ENCODE measurements at regions of chr15 and their contacts with region 1.

Region 1: GRCh38 chr15:89334510-89335288 is at the start of gene POLG:
- DNase-seq: peak; percentile 99
- H3K4me3 Mint-ChIP-seq: peak within 1 kb of the TSS; percentile 85
- H3K27ac Mint-ChIP-seq: peak within 1 kb of the TSS; percentile 93
- H3K4me1 Mint-ChIP-seq: peaks cover 50% of the 10 kb centered on the region
- H3K27me3 Mint-ChIP-seq: peaks cover 4% of the 10 kb centered on the region
- total RNA-seq, gene POLG: 94.8 to 97.4 TPM

Region 2: GRCh38 chr15:88913017-88913849 is 421.5 kb before region 1 on chr15 and contains the start of gene MFGE8:
- CTCF ChIA-PET with region 1: no interaction called
- POLR2A ChIA-PET with region 1: no interaction called
- intact Hi-C with region 1: loop called (anchors 10 kb)
- DNase-seq: peak; percentile 78
- H3K4me3 Mint-ChIP-seq: peak within 1 kb of the TSS; percentile 76
- H3K27ac Mint-ChIP-seq: peak within 1 kb of the TSS; percentile 42
- H3K4me1 Mint-ChIP-seq: peaks cover 17% of the 10 kb centered on the region
- H3K27me3 Mint-ChIP-seq: peaks cover 2% of the 10 kb centered on the region
- total RNA-seq, gene MFGE8: 13.7 to 16.4 TPM

Region 3: GRCh38 chr15:89243691-89244471 is 90.8 kb before region 1 on chr15 and contains the start of gene FANCI:
- CTCF ChIA-PET with region 1: interaction called, 3 read pairs
- POLR2A ChIA-PET with region 1: interaction called, 3 read pairs
- intact Hi-C with region 1: loop called (anchors 1 kb)
- DNase-seq: peak; percentile 98
- H3K4me3 Mint-ChIP-seq: peak within 1 kb of the TSS; percentile 96
- H3K27ac Mint-ChIP-seq: peak within 1 kb of the TSS; percentile 90
- H3K4me1 Mint-ChIP-seq: peaks cover 27% of the 10 kb centered on the region
- H3K27me3 Mint-ChIP-seq: no peaks in the 10 kb centered on the region
- total RNA-seq, gene FANCI: 208 to 213 TPM

Region 4: GRCh38 chr15:89349212-89349558 is 14.5 kb after region 1 on chr15:
- CTCF ChIA-PET with region 1: no interaction called
- POLR2A ChIA-PET with region 1: no interaction called
- intact Hi-C with region 1: no loop called
- DNase-seq: peak; percentile 25
- H3K4me3 Mint-ChIP-seq: no peak overlapping the region
- H3K27ac Mint-ChIP-seq: peak overlapping the region; percentile 55
- H3K4me1 Mint-ChIP-seq: peaks cover 11% of the 10 kb centered on the region
- H3K27me3 Mint-ChIP-seq: peaks cover 18% of the 10 kb centered on the region

Region 5: GRCh38 chr15:89575146-89575655 is 240.5 kb after region 1 on chr15 and contains the start of gene TICRR:
- CTCF ChIA-PET with region 1: no interaction called
- POLR2A ChIA-PET with region 1: interaction called, 4 read pairs
- intact Hi-C with region 1: loop called (anchors 2 kb)
- DNase-seq: peak; percentile 98
- H3K4me3 Mint-ChIP-seq: peak within 1 kb of the TSS; percentile 82
- H3K27ac Mint-ChIP-seq: peak within 1 kb of the TSS; percentile 70
- H3K4me1 Mint-ChIP-seq: peaks cover 20% of the 10 kb centered on the region
- H3K27me3 Mint-ChIP-seq: peaks cover 7% of the 10 kb centered on the region
- total RNA-seq, gene TICRR: 16.8 to 18.0 TPM